HEK293 (cell line): ENCODE measurements at regions of chr10 and their contacts with region 1.

Region 1: DNA sequence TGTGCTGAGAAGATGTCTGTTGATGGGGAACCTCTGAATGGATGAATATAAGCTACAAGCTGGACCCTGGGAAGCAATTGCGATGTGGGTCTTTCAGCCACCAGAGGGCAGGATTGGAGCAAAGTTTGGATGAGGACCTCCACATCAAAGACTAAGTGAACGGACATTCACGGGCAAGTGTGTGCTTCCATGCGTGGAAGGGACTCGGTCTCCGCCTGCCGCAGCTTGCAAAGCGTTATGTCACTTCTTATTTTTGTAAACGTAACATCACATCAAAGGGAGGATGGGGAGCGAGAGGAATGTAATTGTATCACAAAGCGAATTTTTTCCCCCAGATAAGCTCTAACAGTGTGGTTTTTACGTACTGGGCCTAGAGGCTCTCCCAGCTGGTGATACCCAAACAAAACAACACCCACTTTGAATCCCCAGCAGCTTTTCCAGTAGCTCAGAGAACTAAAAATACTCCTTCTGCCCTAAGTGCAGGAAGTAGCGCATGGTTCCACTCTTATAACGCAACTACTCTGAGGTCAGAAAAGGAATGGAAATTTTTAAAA is 65.0 kb downstream of the VWA2 start:
- H3K4me3 ChIP-seq: no peak overlapping the region; the same call in 1 of the 2 replicates
- H3K27ac ChIP-seq: no peak overlapping the region
- H3K4me1 ChIP-seq: no peaks in the 10 kb centered on the region
- CTCF ChIP-seq: peak; percentile 76

Region 2: DNA sequence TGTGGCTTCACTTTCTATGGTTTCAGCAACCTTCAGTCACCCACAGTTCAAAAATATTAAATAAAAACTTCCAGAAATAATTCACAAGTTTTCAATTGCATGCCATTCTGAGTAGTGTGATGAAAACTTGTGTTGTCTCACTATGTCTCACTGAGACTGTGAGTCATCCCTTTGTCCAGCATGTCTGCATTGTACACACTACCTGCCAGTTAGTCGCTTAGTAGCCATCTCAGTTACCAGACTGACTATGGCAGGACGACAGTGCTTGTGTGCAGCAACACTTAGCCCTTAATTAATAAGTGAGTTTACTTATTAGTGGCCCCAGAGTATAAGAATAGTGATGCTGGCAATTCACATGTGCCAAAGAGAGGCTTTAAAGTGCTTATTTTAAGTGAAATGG is 152.6 kb before region 1 on chr10:
- CTCF ChIA-PET with region 1: no interaction called
- POLR2A ChIA-PET with region 1: no interaction called
- H3K4me3 ChIP-seq: no peak overlapping the region
- H3K27ac ChIP-seq: no peak overlapping the region
- H3K4me1 ChIP-seq: no peaks in the 10 kb centered on the region
- CTCF ChIP-seq: no peak

Region 3: GRCh38 chr10:114320249-114321116 is 16.4 kb after region 1 on chr10:
- CTCF ChIA-PET with region 1: interaction called, 12 read pairs
- POLR2A ChIA-PET with region 1: no interaction called
- H3K4me3 ChIP-seq: no peak overlapping the region
- H3K27ac ChIP-seq: no peak overlapping the region
- H3K4me1 ChIP-seq: no peaks in the 10 kb centered on the region
- CTCF ChIP-seq: no peak

Region 4: DNA sequence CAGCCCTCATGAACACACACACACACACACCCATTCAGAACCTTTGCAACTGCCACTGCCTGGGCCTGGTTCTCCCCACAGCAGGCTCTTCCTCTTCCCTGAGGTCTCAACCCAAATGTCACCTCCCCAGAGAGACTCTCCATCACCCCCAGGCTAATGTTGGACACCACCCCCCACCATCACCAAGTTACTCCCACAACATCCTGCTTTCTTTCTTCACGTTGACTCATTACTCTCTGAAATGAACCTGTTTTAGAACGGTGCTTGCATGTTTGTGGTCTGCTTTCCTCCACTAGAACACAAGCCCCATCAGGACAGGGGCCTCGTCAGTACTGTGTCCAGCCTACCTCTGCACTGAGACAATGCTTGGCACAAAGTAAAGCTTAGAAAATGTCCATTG is 84.2 kb after region 1 on chr10:
- CTCF ChIA-PET with region 1: interaction called, 13 read pairs
- POLR2A ChIA-PET with region 1: no interaction called
- H3K4me3 ChIP-seq: no peak overlapping the region
- H3K27ac ChIP-seq: no peak overlapping the region
- H3K4me1 ChIP-seq: no peaks in the 10 kb centered on the region
- CTCF ChIP-seq: no peak

Region 5: GRCh38 chr10:114437456-114438292 is 133.6 kb after region 1 on chr10:
- CTCF ChIA-PET with region 1: interaction called, 20 read pairs
- POLR2A ChIA-PET with region 1: no interaction called
- H3K4me3 ChIP-seq: no peak overlapping the region
- H3K27ac ChIP-seq: no peak overlapping the region
- H3K4me1 ChIP-seq: no peaks in the 10 kb centered on the region
- CTCF ChIP-seq: 0 out of 2 replicates have a peak, but pooled peaks have one; percentile 16

Region 6: GRCh38 chr10:114458955-114459354 is 154.9 kb after region 1 on chr10:
- CTCF ChIA-PET with region 1: interaction called, 30 read pairs
- POLR2A ChIA-PET with region 1: interaction called, 3 read pairs
- H3K4me3 ChIP-seq: no peak overlapping the region
- H3K27ac ChIP-seq: no peak overlapping the region
- H3K4me1 ChIP-seq: no peaks in the 10 kb centered on the region
- CTCF ChIP-seq: no peak

Region 7: DNA sequence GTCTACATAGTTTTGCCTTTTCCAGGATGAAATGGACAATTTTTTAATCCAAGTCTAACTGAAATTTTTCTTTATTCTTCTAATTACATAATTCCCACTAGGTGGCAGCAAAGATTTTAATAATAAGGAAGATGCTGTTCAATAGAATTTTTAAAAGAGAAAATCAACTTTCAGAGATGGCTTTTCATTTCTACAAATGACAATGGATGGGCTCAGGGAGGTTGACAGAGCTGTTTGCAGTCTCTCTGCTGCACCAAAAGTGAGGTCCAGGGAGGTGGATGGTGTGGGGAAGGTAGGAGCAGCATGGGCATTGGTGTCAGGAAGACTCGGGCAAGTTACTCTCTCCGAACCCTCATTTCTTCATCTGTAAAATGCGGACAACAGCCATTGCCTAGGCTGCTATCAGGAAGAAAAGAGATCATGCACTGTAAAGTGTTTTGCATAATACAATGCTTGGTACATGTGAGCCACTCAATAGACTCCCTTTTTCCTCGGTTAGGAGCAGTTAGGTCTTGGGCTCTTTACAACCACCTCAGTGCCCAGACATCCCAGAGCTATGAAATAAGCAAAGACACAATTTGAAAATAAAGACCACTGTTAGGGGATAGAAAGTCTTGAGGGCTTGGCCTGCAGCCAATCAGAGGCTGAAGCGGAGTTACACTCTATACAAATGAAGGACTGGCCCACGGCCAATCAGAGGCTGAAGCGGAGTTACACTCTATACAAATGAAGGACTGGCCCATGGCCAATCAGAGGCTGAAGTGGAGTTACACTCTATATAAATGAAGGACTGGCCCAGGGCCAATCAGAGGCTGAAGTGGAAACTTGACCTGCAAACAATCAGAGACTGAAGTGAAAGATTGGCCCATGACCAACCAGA is 246.9 kb after region 1 on chr10:
- CTCF ChIA-PET with region 1: interaction called, 13 read pairs
- POLR2A ChIA-PET with region 1: no interaction called
- H3K4me3 ChIP-seq: no peak overlapping the region
- H3K27ac ChIP-seq: peak overlapping the region; percentile 38
- H3K4me1 ChIP-seq: peaks cover 10% of the 10 kb centered on the region
- CTCF ChIP-seq: no peak